ENCODE measurements at regions of chr4 and their contacts with region 1.

Region 1: DNA sequence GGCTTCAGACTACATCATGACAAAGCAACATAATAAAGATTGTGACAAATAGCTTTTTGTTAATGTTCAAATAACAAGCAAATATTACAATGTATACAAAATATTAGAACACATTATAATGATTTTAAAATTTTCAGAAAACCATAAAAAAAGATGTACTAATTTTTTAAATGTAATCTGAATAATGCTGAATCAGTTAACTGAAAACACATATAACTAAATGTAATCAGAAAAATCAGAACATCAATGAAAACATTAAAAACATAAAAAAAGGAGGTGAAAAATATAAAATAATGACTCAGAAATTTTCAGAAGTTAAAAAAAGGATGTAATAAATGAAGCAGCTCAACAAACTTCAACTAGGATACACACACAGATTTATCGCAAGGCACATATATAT is 53.5 kb downstream of the ZNF721 start:
- DNase-seq: no peak
- H3K4me3 ChIP-seq: no peak overlapping the region
- H3K27ac ChIP-seq: no peak overlapping the region
- H3K4me1 ChIP-seq: no peaks in the 10 kb centered on the region
- H3K27me3 ChIP-seq: no peaks in the 10 kb centered on the region
- CTCF ChIP-seq: no peak

Region 2: GRCh38 chr4:373062-373839 is 72.2 kb before region 1 on chr4:
- intact Hi-C with region 1: loop called (anchors 10 kb)
- DNase-seq: no peak
- H3K4me3 ChIP-seq: no peak overlapping the region
- H3K27ac ChIP-seq: no peak overlapping the region
- H3K4me1 ChIP-seq: no peaks in the 10 kb centered on the region
- H3K27me3 ChIP-seq: no peaks in the 10 kb centered on the region
- CTCF ChIP-seq: no peak

Region 3: DNA sequence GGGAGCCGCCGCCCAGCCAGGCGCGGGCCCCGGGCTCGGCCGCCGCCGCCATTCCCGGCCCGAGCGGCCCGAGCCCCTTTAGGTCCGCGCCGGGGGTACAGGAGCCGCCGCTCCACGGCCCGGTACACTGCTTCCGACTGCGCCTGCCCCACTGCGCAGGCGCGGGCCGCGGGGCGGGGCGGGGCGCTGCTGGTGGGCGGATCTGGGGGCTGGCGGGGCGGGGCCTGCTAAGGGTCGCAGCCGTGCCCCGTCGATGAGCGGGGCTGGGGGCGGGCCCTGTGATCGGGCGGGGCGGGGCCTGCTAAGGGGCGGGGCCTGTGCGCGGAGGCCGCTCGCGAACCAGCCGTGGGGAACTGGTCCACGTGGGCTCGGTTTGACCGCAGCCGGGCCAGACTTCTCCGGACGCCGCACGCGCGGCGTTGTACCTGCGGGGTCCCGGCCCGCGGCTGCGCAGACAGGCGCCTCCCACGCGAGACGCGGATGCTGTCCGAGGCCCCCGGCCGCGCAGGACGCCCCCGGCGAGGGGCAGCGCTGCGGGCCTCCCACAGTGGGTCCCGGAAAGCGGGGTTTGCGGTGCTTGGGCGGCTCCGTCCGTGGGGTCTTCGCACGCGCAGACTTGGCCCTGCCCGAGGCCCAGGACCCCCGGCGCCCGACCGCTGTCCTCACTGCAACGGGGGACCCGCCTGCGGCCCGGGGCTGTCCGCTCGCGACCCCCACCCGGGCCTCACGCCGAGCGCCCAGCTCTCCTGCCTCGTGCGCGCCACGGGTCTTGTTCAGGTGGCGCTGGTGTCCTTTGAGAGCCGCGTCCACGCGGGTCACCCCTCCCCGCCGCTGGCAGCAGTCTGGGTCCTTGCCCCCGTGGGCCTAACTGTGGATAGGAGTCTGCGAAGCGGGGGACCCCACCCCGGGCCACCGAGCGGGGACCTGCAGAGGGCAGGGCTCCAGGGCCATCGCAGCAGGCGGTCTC is 528.3 kb after region 1 on chr4 and contains the start of gene DGKQ:
- intact Hi-C with region 1: no loop called
- DNase-seq: peak; percentile 90
- H3K4me3 ChIP-seq: peak within 1 kb of the TSS; percentile 90
- H3K27ac ChIP-seq: no peak within 1 kb of the TSS
- H3K4me1 ChIP-seq: peaks cover 29% of the 10 kb centered on the region
- H3K27me3 ChIP-seq: peaks cover 1% of the 10 kb centered on the region
- CTCF ChIP-seq: no peak
- total RNA-seq, gene DGKQ: 3.5 TPM